Activated CD4-positive, alpha-beta T cell treated with anti-CD3 and anti-CD28 coated beads, Interleukin-2, amount 10 ng/mL, durations not matched to agents 24 days and 14 days (primary cell): ENCODE measurements at regions of chr16 and their contacts with region 1.

Region 1: GRCh38 chr16:20900299-20901067 is at the starts of genes DCUN1D3 and LYRM1:
- DNase-seq: peak; percentile 95
- H3K4me3 Mint-ChIP-seq: peak within 1 kb of the TSS; percentile 89
- H3K27ac Mint-ChIP-seq: peak within 1 kb of the TSS; percentile 96
- H3K4me1 Mint-ChIP-seq: peaks cover 74% of the 10 kb centered on the region
- H3K27me3 Mint-ChIP-seq: no peaks in the 10 kb centered on the region
- total RNA-seq, gene DCUN1D3: 10.8 and 12.3 TPM in 2 replicates
- total RNA-seq, gene LYRM1: 20.9 and 26.5 TPM in 2 replicates

Region 2: DNA sequence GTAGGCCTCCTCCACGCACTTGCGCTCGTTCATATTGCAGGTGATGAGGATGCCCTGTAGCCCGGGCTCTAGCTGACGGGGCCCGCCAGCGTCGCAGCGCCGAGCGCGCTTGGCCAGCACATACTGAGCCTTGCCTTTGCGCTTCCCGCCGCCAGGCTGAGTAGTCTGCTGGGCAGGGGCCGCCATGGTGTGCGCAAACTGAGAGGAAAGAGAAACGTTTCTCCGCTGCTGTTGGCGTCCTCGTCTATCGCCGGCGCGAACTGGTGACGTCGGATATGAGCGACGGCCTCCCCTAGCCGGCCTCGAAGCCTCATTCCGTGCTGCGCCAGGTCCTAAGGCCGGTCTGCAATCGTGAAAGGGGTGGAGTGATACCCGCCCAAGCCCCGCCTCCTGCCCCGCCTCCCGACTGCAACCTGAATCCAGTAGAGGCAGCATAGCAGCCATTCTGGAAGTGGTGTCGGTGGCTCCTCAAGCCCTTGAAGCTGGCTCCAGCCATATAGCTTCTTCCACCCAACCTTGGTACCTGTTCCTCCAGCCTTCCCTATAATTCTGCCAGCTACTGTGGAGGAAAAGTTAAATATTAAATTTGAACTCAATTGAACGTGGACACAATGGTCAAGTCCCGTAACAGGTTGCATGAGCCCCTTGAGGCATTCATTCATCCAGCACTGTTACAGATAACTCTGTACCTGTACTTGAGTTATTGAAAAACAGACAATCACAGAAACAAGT is 158.8 kb before region 1 on chr16 and contains the start of gene THUMPD1:
- intact Hi-C with region 1: loop called (anchors 2 kb)
- DNase-seq: peak; percentile 98
- H3K4me3 Mint-ChIP-seq: peak within 1 kb of the TSS; percentile 95
- H3K27ac Mint-ChIP-seq: peak within 1 kb of the TSS; percentile 94
- H3K4me1 Mint-ChIP-seq: peaks cover 14% of the 10 kb centered on the region
- H3K27me3 Mint-ChIP-seq: no peaks in the 10 kb centered on the region
- total RNA-seq, gene THUMPD1: 44.7 and 47.4 TPM in 2 replicates

Region 3: DNA sequence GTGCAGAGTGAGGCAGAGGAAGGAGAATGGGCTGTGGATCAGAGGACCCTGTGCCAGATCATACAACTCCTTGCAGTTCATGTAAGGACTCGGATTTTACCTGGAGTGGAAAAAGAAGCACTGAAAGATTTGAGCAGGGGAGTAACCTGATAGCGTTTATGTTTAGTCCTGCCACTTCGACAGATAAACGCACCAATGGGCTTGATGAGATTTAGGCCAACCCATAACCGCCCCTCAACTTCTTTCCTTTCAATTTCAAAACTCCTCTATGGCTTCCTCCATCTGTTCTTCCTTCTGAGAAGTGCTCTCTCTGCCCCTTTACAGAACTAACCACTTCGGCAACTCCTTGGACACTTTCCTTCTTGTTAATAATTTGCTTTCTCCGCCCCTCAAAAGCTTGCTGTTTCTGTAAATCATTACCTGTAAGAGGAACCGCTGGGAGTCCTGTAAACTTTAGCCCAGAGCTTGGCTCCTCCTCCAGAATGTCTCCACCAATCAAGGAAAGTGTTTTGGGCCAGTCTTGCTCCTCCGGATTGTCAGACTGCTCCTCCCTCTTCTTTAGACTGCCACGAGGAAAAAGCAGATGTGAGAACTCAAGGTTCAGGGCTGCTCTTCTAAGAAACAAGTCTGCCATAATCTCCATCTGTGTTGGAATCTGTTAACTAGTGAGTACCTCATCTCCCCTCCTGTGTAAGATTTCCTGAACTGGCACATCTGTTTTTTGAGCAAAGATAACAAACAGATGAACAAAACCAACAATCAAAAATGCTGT is 136.8 kb before region 1 on chr16 and contains the start of gene ACSM3:
- intact Hi-C with region 1: no loop called
- DNase-seq: peak; percentile 91
- H3K4me3 Mint-ChIP-seq: peak within 1 kb of the TSS; percentile 87
- H3K27ac Mint-ChIP-seq: peak within 1 kb of the TSS; percentile 84
- H3K4me1 Mint-ChIP-seq: peaks cover 13% of the 10 kb centered on the region
- H3K27me3 Mint-ChIP-seq: no peaks in the 10 kb centered on the region
- total RNA-seq, gene ACSM3: 2.7 and 3.5 TPM in 2 replicates

Region 4: DNA sequence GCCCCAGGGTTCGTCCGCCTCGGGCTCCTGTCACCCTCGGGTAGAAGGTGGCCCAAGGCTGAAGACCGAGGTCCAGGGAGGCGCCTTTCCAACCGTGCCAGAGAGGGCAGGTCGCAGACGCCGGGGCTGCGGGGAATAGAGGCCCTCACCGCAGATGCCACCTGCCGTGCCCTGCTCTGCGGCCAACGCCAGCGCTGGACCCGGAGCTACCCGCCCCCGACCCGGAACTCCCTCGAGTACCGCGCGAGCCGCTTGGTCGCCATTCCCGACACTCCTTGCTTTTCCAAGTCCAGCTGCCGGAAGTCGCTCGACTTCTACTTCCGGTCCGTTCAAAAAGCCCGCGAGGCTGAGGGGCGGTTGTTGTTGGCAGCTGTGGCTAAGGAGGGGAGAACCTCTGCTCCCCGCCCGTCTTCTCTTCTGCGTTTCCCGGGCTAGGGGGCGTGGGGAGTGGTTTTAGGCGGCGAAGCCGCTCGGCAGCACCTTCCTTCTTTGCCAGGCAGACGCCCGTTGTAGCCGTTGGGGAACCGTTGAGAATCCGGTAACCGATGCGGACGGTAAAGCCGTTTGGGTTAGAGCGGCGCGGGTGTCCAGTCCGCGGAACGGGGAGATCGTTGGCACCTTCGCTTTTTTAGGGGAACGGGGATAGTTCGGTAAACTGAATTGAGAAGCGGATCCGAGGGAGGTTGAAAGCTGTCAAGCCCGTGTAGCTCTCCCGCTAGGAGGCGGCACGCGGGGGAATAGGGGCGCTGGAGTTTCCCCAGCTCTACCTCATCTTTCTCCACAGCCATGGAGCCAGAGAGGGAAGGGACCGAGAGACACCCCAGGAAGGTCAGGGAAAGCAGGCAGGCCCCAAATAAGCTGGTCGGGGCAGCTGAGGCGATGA is 94.1 kb before region 1 on chr16 and contains the starts of genes ERI2 and REXO5:
- intact Hi-C with region 1: loop called (anchors 2 kb)
- DNase-seq: peak; percentile 93
- H3K4me3 Mint-ChIP-seq: peak within 1 kb of the TSS; percentile 94
- H3K27ac Mint-ChIP-seq: peak within 1 kb of the TSS; percentile 96
- H3K4me1 Mint-ChIP-seq: peaks cover 24% of the 10 kb centered on the region
- H3K27me3 Mint-ChIP-seq: no peaks in the 10 kb centered on the region
- total RNA-seq, gene ERI2: 15.1 and 15.7 TPM in 2 replicates
- total RNA-seq, gene REXO5: 9.3 and 11.7 TPM in 2 replicates

Region 5: GRCh38 chr16:20859699-20860098 is 40.8 kb before region 1 on chr16:
- intact Hi-C with region 1: no loop called
- DNase-seq: no peak
- H3K4me3 Mint-ChIP-seq: no peak overlapping the region
- H3K27ac Mint-ChIP-seq: no peak overlapping the region
- H3K4me1 Mint-ChIP-seq: peaks cover 24% of the 10 kb centered on the region
- H3K27me3 Mint-ChIP-seq: no peaks in the 10 kb centered on the region

Region 6: GRCh38 chr16:20874088-20874581 is 26.3 kb before region 1 on chr16:
- intact Hi-C with region 1: loop called (anchors 1 kb)
- DNase-seq: peak; percentile 80
- H3K4me3 Mint-ChIP-seq: peak overlapping the region; percentile 70
- H3K27ac Mint-ChIP-seq: peak overlapping the region; percentile 86
- H3K4me1 Mint-ChIP-seq: peaks cover 68% of the 10 kb centered on the region
- H3K27me3 Mint-ChIP-seq: no peaks in the 10 kb centered on the region

Region 7: DNA sequence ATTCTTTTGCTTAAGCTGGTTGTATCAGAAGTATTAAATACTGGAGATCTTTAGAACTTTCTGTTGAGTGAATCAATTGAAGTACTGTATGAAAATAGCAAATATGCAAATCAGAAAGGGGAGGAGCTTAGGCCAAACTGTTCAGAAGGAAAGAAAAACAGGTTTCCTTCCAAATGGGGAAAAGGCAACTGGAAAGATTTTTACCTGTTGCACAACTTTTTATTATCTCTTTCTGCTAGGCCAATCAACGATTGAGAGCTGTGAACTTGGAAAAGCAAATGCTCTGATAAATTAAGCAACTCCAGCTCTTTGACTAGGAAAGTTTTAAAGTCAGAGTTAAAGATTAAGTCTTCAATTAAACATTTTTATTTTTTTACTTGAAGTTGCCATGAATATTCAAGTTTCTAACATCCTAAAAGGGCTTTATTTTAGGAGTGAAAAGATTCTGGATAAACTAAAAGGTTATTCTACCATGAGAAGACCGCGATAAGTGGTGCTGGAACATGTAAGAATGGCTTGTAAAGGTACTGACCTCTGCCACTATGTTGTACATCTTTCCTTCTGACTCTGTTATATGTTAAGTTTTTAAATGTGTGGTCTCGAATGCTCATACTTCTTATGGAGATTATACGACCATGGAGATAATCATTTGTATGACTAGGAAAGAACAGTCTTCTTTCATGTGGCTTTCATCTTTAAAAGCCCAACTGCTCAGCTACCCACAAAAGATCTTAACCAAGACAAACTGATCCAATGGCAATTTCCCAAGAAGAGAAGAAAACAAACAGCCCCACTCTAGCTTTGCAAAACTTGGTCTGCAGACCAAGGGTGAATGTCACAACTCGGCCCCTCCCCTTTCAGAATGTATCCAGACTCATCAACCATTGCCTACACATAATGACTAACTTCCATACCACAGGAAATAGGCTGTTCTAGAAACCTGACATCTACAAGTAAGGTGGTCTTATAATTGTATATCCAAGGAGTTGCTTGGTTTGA is 16.6 kb before region 1 on chr16:
- intact Hi-C with region 1: loop called (anchors 2 kb)
- DNase-seq: peak; percentile 68
- H3K4me3 Mint-ChIP-seq: peak overlapping the region; percentile 1
- H3K27ac Mint-ChIP-seq: peak overlapping the region; percentile 22
- H3K4me1 Mint-ChIP-seq: peaks cover 39% of the 10 kb centered on the region
- H3K27me3 Mint-ChIP-seq: no peaks in the 10 kb centered on the region

Region 8: DNA sequence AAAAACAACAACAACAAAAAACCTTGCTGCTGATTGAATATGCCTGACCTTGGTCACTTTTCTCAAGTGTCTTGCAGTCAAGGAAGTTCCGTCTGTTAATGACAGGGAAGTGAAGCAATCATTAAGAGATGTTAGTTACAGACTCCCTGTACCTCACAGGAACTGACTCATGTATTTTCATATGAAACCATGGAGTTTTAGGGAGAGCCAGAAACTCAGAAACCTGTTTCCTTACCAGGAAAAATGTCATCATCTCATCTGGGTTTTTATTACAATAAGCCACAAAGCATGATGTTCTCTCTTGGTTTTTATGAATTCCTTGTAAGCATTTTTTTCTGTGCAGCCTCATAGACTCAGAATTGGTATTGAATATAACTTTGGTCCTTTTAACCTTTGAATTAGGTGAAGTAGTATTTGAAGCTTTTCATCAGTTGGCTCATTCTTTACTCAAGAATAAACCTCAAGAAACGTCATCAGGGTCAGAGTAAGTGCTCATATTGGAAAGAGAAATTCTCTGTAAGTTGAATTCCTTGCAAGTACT is 10.4 kb after region 1 on chr16:
- intact Hi-C with region 1: loop called (anchors 1 kb)
- DNase-seq: no peak
- H3K4me3 Mint-ChIP-seq: peak overlapping the region; percentile 62
- H3K27ac Mint-ChIP-seq: peak overlapping the region; percentile 87
- H3K4me1 Mint-ChIP-seq: peaks cover 42% of the 10 kb centered on the region
- H3K27me3 Mint-ChIP-seq: no peaks in the 10 kb centered on the region

Region 9: GRCh38 chr16:20928774-20929411 is 28.4 kb after region 1 on chr16:
- intact Hi-C with region 1: no loop called
- DNase-seq: no peak
- H3K4me3 Mint-ChIP-seq: no peak overlapping the region
- H3K27ac Mint-ChIP-seq: no peak overlapping the region
- H3K4me1 Mint-ChIP-seq: peaks cover 2% of the 10 kb centered on the region
- H3K27me3 Mint-ChIP-seq: no peaks in the 10 kb centered on the region

Region 10: DNA sequence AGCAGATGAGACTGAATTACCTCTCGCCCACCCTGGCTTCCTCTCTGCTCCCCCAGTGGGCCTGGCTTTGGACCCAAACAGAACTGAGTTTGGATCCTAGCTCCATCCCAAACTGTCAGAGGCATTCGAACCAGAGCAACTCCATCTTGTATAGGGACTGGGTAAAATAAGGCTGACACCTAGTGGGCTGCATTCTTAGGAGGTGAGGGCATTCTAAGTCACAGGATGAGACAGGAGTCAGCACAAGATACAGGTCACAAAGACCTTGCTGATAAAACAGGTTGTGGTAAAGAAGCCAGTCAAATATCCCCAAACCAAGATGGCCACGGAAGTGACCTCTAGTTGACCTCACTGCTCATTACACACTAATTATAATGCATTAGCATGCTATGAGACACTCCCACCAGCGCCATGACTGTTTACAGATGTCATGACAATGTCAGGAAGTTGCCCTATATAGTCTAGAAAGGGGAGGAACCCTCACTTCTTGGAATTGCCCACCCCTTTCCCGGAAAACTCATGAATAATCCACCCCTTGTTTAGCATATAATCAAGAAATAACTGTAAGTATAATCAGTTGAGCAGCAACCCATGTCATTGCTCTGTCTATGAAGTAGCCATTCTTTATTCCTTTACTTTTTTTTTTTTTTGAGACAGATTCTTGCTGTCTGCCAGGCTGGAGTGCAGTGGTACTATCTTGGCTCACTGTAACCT is 44.5 kb after region 1 on chr16:
- intact Hi-C with region 1: loop called (anchors 2 kb)
- DNase-seq: peak; percentile 89
- H3K4me3 Mint-ChIP-seq: no peak overlapping the region
- H3K27ac Mint-ChIP-seq: peak overlapping the region; percentile 67
- H3K4me1 Mint-ChIP-seq: peaks cover 40% of the 10 kb centered on the region
- H3K27me3 Mint-ChIP-seq: no peaks in the 10 kb centered on the region